ENCODE measurements at regions of chr13 and their contacts with region 1.

Region 1: GRCh38 chr13:40217675-40218074 is 448.8 kb downstream of the FOXO1 start:
- DNase-seq: no peak
- ATAC-seq: no peak
- H3K4me3 ChIP-seq: no peak overlapping the region
- H3K27ac ChIP-seq: no peak overlapping the region
- H3K4me1 ChIP-seq: peaks cover 20% of the 10 kb centered on the region
- H3K27me3 ChIP-seq: no peaks in the 10 kb centered on the region
- CTCF ChIP-seq: no peak
- EP300 ChIP-seq: no peak
- POLR2A ChIP-seq: no peak
- RAD21 ChIP-seq: no peak

Region 2: GRCh38 chr13:40206241-40207000 is 11.3 kb before region 1 on chr13:
- CTCF ChIA-PET with region 1: no interaction called
- POLR2A ChIA-PET with region 1: no interaction called
- in situ Hi-C with region 1: no loop called
- intact Hi-C with region 1: no loop called
- DNase-seq: no peak
- ATAC-seq: no peak
- H3K4me3 ChIP-seq: no peak overlapping the region
- H3K27ac ChIP-seq: no peak overlapping the region
- H3K4me1 ChIP-seq: no peaks in the 10 kb centered on the region
- H3K27me3 ChIP-seq: no peaks in the 10 kb centered on the region
- CTCF ChIP-seq: no peak
- EP300 ChIP-seq: no peak
- POLR2A ChIP-seq: no peak
- RAD21 ChIP-seq: no peak

Region 3: DNA sequence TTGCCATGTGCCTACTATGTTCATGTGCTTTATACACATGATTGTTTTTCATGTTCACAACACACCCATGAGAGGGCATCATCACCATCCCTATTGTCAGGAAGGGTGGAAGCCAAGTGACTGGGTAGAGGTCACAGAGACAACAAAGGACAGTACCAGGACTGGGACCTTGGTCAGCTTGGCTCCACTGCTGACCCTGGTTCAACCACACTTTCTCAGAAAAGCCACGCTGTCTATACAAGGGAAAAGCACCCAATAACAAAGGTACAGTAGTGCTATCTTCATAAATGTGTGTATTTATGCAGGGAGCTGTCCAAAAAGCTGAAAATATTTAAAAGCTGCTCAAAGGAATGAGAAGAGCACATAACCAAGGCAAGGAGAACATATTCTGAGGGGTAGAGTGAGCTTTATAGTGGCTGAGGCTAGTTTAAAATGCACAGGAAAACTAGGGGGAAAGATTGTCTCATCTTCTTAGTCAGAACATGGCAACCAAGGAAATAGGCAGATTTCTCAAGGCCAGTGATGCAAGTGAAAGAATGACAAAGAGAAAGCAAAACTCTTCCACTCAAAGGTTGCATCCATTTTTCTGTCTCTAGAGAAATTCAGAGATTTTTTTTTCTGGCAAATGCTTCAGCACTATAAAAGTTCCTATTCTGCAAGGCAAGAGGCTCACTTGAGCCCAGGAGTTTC is 33.8 kb after region 1 on chr13:
- CTCF ChIA-PET with region 1: no interaction called
- POLR2A ChIA-PET with region 1: no interaction called
- in situ Hi-C with region 1: no loop called
- intact Hi-C with region 1: loop called (anchors 1 kb)
- DNase-seq: no peak
- ATAC-seq: peak; percentile 57
- H3K4me3 ChIP-seq: no peak overlapping the region
- H3K27ac ChIP-seq: no peak overlapping the region
- H3K4me1 ChIP-seq: no peaks in the 10 kb centered on the region
- H3K27me3 ChIP-seq: peaks cover 0 to 4% of the 10 kb centered on the region in 2 experiments; a peak in 2 of 5 replicates
- CTCF ChIP-seq: peak; percentile 23; the same call in 1 of the 2 replicates
- EP300 ChIP-seq: no peak
- POLR2A ChIP-seq: no peak
- RAD21 ChIP-seq: no peak

Region 4: GRCh38 chr13:40666045-40666904 is 448.6 kb after region 1 on chr13 and contains the start of gene FOXO1:
- CTCF ChIA-PET with region 1: no interaction called
- POLR2A ChIA-PET with region 1: no interaction called
- in situ Hi-C with region 1: no loop called
- intact Hi-C with region 1: no loop called
- DNase-seq: peak; percentile 51
- ATAC-seq: peak; percentile 77
- H3K4me3 ChIP-seq: peak within 1 kb of the TSS; percentile 96 to 99 (median 99)
- H3K27ac ChIP-seq: peak within 1 kb of the TSS; percentile 88
- H3K4me1 ChIP-seq: peaks cover 43% of the 10 kb centered on the region
- H3K27me3 ChIP-seq: no peaks in the 10 kb centered on the region; a peak in 1 of 5 replicates
- CTCF ChIP-seq: 0 out of 2 replicates have a peak, but pooled peaks have one; percentile 5
- EP300 ChIP-seq: no peak
- POLR2A ChIP-seq: peak; percentile 82 to 94
- RAD21 ChIP-seq: peak; percentile 52; the same call in 1 of the 2 replicates
- total RNA-seq, gene FOXO1: 8.1 and 13.8 TPM in 2 replicates

Region 5: DNA sequence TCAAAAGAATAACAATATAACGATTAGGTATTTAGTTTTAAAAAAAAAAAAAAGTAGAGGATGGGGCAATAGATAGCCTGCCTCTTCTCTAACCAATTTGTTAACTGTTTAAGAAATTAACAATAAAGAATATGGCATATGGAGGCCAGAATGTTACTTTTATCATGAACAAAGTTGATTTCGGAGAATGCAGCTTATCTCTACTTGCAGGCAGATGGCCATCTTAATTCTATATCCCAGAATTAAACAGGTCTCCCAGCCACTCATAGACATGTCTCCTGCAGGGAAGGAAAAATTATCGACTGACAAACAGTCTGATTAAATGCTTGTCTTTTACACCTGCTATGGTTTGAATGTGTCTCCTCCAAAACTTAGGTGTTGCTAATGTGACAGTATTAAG is 668.3 kb after region 1 on chr13:
- CTCF ChIA-PET with region 1: no interaction called
- POLR2A ChIA-PET with region 1: no interaction called
- in situ Hi-C with region 1: no loop called
- intact Hi-C with region 1: no loop called
- DNase-seq: no peak
- ATAC-seq: no peak
- H3K4me3 ChIP-seq: no peak overlapping the region
- H3K27ac ChIP-seq: no peak overlapping the region
- H3K4me1 ChIP-seq: peaks cover 6% of the 10 kb centered on the region
- H3K27me3 ChIP-seq: no peaks in the 10 kb centered on the region
- CTCF ChIP-seq: no peak
- EP300 ChIP-seq: no peak
- POLR2A ChIP-seq: no peak
- RAD21 ChIP-seq: no peak

Measured in HepG2 (cell line).